GM12878 (cell line): ENCODE measurements at regions of chr14 and their contacts with region 1.

Region 1: GRCh38 chr14:100192672-100193416 is 33.4 kb upstream of the DEGS2 start:
- DNase-seq: peak; percentile 96
- ATAC-seq: peak; percentile 99
- H3K4me3 ChIP-seq: peak overlapping the region; percentile 68
- H3K27ac ChIP-seq: peak overlapping the region; percentile 86
- H3K4me1 ChIP-seq: peaks cover 11% of the 10 kb centered on the region
- H3K27me3 ChIP-seq: no peaks in the 10 kb centered on the region
- CTCF ChIP-seq: peak; percentile 73 to 91 (median 80)
- EP300 ChIP-seq: no peak
- POLR2A ChIP-seq: peak; percentile 85
- RAD21 ChIP-seq: peak; percentile 73

Region 2: GRCh38 chr14:99982537-99983250 is 210.2 kb before region 1 on chr14:
- CTCF ChIA-PET with region 1: interaction called, 42 read pairs
- POLR2A ChIA-PET with region 1: no interaction called
- RAD21 ChIA-PET with region 1: interaction called, 5 read pairs
- SMC1A ChIA-PET with region 1: interaction called, 8 read pairs
- in situ Hi-C with region 1: loop called (anchors 5 kb)
- intact Hi-C with region 1: loop called (anchors 2 kb)
- DNase-seq: peak; percentile 33
- ATAC-seq: peak; percentile 95
- H3K4me3 ChIP-seq: no peak overlapping the region
- H3K27ac ChIP-seq: no peak overlapping the region
- H3K4me1 ChIP-seq: no peaks in the 10 kb centered on the region
- H3K27me3 ChIP-seq: no peaks in the 10 kb centered on the region
- CTCF ChIP-seq: peak; percentile 84 to 93 (median 86)
- EP300 ChIP-seq: no peak
- POLR2A ChIP-seq: no peak
- RAD21 ChIP-seq: peak; percentile 93

Region 3: GRCh38 chr14:100108042-100108825 is 84.6 kb before region 1 on chr14:
- CTCF ChIA-PET with region 1: interaction called, 10 read pairs
- POLR2A ChIA-PET with region 1: interaction called, 3 read pairs
- RAD21 ChIA-PET with region 1: interaction called, 3 read pairs
- SMC1A ChIA-PET with region 1: interaction called, 5 read pairs
- in situ Hi-C with region 1: no loop called
- intact Hi-C with region 1: loop called (anchors 5 kb)
- DNase-seq: peak; percentile 15
- ATAC-seq: peak; percentile 99
- H3K4me3 ChIP-seq: no peak overlapping the region
- H3K27ac ChIP-seq: no peak overlapping the region
- H3K4me1 ChIP-seq: peaks cover 9% of the 10 kb centered on the region
- H3K27me3 ChIP-seq: no peaks in the 10 kb centered on the region
- CTCF ChIP-seq: peak; percentile 82 to 89 (median 87)
- EP300 ChIP-seq: no peak
- POLR2A ChIP-seq: no peak
- RAD21 ChIP-seq: peak; percentile 79

Region 4: GRCh38 chr14:100203949-100204834 is 11.3 kb after region 1 on chr14:
- CTCF ChIA-PET with region 1: interaction called, 16 read pairs
- POLR2A ChIA-PET with region 1: no interaction called
- RAD21 ChIA-PET with region 1: interaction called, 5 read pairs
- SMC1A ChIA-PET with region 1: interaction called, 4 read pairs
- in situ Hi-C with region 1: no loop called
- intact Hi-C with region 1: no loop called
- DNase-seq: no peak
- ATAC-seq: no peak
- H3K4me3 ChIP-seq: no peak overlapping the region
- H3K27ac ChIP-seq: no peak overlapping the region
- H3K4me1 ChIP-seq: no peaks in the 10 kb centered on the region
- H3K27me3 ChIP-seq: no peaks in the 10 kb centered on the region
- CTCF ChIP-seq: no peak
- EP300 ChIP-seq: no peak
- POLR2A ChIP-seq: no peak
- RAD21 ChIP-seq: no peak

Region 5: GRCh38 chr14:100221533-100222223 is 28.8 kb after region 1 on chr14:
- CTCF ChIA-PET with region 1: interaction called, 29 read pairs
- POLR2A ChIA-PET with region 1: no interaction called
- RAD21 ChIA-PET with region 1: interaction called, 12 read pairs
- SMC1A ChIA-PET with region 1: interaction called, 10 read pairs
- in situ Hi-C with region 1: no loop called
- intact Hi-C with region 1: no loop called
- DNase-seq: no peak
- ATAC-seq: peak; percentile 98
- H3K4me3 ChIP-seq: peak overlapping the region; percentile 79
- H3K27ac ChIP-seq: peak overlapping the region; percentile 93
- H3K4me1 ChIP-seq: peaks cover 25% of the 10 kb centered on the region
- H3K27me3 ChIP-seq: no peaks in the 10 kb centered on the region
- CTCF ChIP-seq: no peak
- EP300 ChIP-seq: no peak
- POLR2A ChIP-seq: peak; percentile 78
- RAD21 ChIP-seq: no peak

Region 6: GRCh38 chr14:100239840-100240724 is 47.2 kb after region 1 on chr14:
- CTCF ChIA-PET with region 1: interaction called, 20 read pairs
- POLR2A ChIA-PET with region 1: interaction called, 3 read pairs
- RAD21 ChIA-PET with region 1: interaction called, 7 read pairs
- SMC1A ChIA-PET with region 1: interaction called, 5 read pairs
- in situ Hi-C with region 1: no loop called
- intact Hi-C with region 1: loop called (anchors 2 kb)
- DNase-seq: no peak
- ATAC-seq: peak; percentile 52
- H3K4me3 ChIP-seq: peak overlapping the region; percentile 95
- H3K27ac ChIP-seq: peak overlapping the region; percentile 74
- H3K4me1 ChIP-seq: no peaks in the 10 kb centered on the region
- H3K27me3 ChIP-seq: no peaks in the 10 kb centered on the region
- CTCF ChIP-seq: peak; percentile 58 to 71 (median 71); a peak in 5 of 6 replicates
- EP300 ChIP-seq: no peak
- POLR2A ChIP-seq: peak; percentile 60; the same call in 1 of the 2 replicates
- RAD21 ChIP-seq: peak; percentile 29; the same call in 1 of the 2 replicates

Region 7: GRCh38 chr14:100362311-100362927 is 169.6 kb after region 1 on chr14:
- CTCF ChIA-PET with region 1: no interaction called
- POLR2A ChIA-PET with region 1: no interaction called
- RAD21 ChIA-PET with region 1: no interaction called
- SMC1A ChIA-PET with region 1: no interaction called
- in situ Hi-C with region 1: no loop called
- intact Hi-C with region 1: no loop called
- DNase-seq: no peak
- ATAC-seq: no peak
- H3K4me3 ChIP-seq: no peak overlapping the region
- H3K27ac ChIP-seq: no peak overlapping the region
- H3K4me1 ChIP-seq: no peaks in the 10 kb centered on the region; the same call in 1 of the 2 replicates
- H3K27me3 ChIP-seq: no peaks in the 10 kb centered on the region
- CTCF ChIP-seq: no peak
- EP300 ChIP-seq: no peak
- POLR2A ChIP-seq: no peak
- RAD21 ChIP-seq: no peak